ENCODE measurements at regions of chr4 and their contacts with region 1.

Region 1: GRCh38 chr4:153643406-153644383 is 40.4 kb upstream of the TLR2 start:
- DNase-seq: no peak
- H3K4me3 ChIP-seq: no peak overlapping the region
- H3K27ac ChIP-seq: no peak overlapping the region
- H3K4me1 ChIP-seq: peaks cover 0 to 7% (median 0%) of the 10 kb centered on the region in 4 experiments; a peak in 3 of 7 replicates
- H3K27me3 ChIP-seq: no peaks in the 10 kb centered on the region
- CTCF ChIP-seq: peak in 1 of 3 experiments; percentile 23; a peak in 2 of 4 replicates
- EP300 ChIP-seq: no peak
- POLR2A ChIP-seq: no peak
- RAD21 ChIP-seq: peak; percentile 50 to 52

Region 2: DNA sequence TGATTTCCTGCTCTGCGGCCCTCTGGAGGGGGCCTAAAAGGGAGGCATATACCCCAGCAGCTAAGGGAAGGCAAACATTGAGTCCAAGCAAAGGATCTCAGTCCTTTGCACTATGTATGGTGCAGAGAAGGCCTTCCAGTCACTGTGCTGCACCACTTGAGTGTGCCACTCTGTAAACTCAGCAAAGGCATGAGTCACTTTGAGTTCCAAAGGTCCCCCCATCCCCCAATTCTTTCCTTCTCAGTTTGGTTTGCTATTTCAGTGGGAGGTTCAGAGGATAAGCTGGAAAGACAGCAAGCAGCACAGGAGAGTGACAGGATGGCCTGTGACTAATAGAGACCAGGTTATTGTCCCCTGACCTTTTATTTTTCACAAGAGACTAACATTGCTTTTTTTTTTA is 576.3 kb before region 1 on chr4:
- CTCF ChIA-PET with region 1: no interaction called
- POLR2A ChIA-PET with region 1: no interaction called
- DNase-seq: no peak
- H3K4me3 ChIP-seq: no peak overlapping the region
- H3K27ac ChIP-seq: no peak overlapping the region
- H3K4me1 ChIP-seq: peaks cover 2 to 13% (median 7%) of the 10 kb centered on the region in 4 experiments; a peak in 5 of 7 replicates
- H3K27me3 ChIP-seq: no peaks in the 10 kb centered on the region
- CTCF ChIP-seq: no peak
- EP300 ChIP-seq: no peak
- POLR2A ChIP-seq: no peak
- RAD21 ChIP-seq: no peak

Region 3: DNA sequence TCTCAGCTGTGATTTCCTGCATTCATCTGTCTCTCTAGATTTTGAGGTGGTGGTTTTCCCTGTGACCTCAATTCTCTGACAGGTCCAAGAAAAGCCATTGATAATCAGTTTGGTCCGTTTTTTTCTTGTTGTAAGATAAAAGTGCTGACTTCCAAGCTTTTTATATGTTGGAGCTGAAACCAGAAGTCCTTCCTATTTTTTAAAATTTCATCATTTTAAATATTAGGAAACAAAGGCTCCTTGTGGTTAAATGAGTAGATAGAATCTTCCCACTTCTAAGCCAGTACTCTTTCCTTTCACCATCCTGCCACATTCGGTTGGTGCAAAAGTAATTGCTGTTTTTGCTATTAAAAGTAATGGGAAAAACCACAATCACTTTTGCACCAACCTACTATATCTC is 97.8 kb after region 1 on chr4:
- CTCF ChIA-PET with region 1: interaction called, 15 read pairs
- POLR2A ChIA-PET with region 1: no interaction called
- DNase-seq: no peak
- H3K4me3 ChIP-seq: no peak overlapping the region
- H3K27ac ChIP-seq: no peak overlapping the region
- H3K4me1 ChIP-seq: no peaks in the 10 kb centered on the region
- H3K27me3 ChIP-seq: no peaks in the 10 kb centered on the region
- CTCF ChIP-seq: no peak
- EP300 ChIP-seq: no peak
- POLR2A ChIP-seq: no peak
- RAD21 ChIP-seq: no peak